ENCODE measurements at regions of chr1 and their contacts with region 1.

Region 1: GRCh38 chr1:33295450-33296081 is 25.3 kb downstream of the A3GALT2 start:
- DNase-seq: peak; percentile 93
- ATAC-seq: peak; percentile 85

Region 2: GRCh38 chr1:33367485-33368405 is 72.2 kb after region 1 on chr1:
- intact Hi-C with region 1: loop called (anchors 5 kb)
- DNase-seq: peak; percentile 93
- ATAC-seq: peak; percentile 63

Region 3: GRCh38 chr1:33455539-33456501 is 160.3 kb after region 1 on chr1:
- intact Hi-C with region 1: loop called (anchors 10 kb)
- DNase-seq: peak; percentile 60
- ATAC-seq: peak; percentile 86